Calu3 (cell line): ENCODE measurements at regions of chr11 and their contacts with region 1.

Region 1: GRCh38 chr11:10899121-10899830 is 41.4 kb upstream of the ZBED5 start:
- DNase-seq: peak; percentile 10
- H3K4me3 Mint-ChIP-seq: peak overlapping the region; percentile 48
- H3K27ac Mint-ChIP-seq: peak overlapping the region; percentile 94
- H3K4me1 Mint-ChIP-seq: peaks cover 66% of the 10 kb centered on the region
- H3K27me3 Mint-ChIP-seq: no peaks in the 10 kb centered on the region
- CTCF ChIP-seq: no peak

Region 2: GRCh38 chr11:10857709-10858438 is 41.4 kb before region 1 on chr11 and contains the start of gene ZBED5:
- CTCF ChIA-PET with region 1: interaction called, 8 read pairs
- intact Hi-C with region 1: loop called (anchors 2 kb)
- DNase-seq: peak; percentile 95
- H3K4me3 Mint-ChIP-seq: peak within 1 kb of the TSS; percentile 96
- H3K27ac Mint-ChIP-seq: peak within 1 kb of the TSS; percentile 89
- H3K4me1 Mint-ChIP-seq: peaks cover 17% of the 10 kb centered on the region
- H3K27me3 Mint-ChIP-seq: no peaks in the 10 kb centered on the region
- CTCF ChIP-seq: no peak
- total RNA-seq, gene ZBED5: 49.8 and 51.4 TPM in 2 replicates

Region 3: GRCh38 chr11:10878408-10879214 is 20.7 kb before region 1 on chr11:
- CTCF ChIA-PET with region 1: interaction called, 10 read pairs
- intact Hi-C with region 1: no loop called
- DNase-seq: peak; percentile 55
- H3K4me3 Mint-ChIP-seq: no peak overlapping the region
- H3K27ac Mint-ChIP-seq: peak overlapping the region; percentile 86
- H3K4me1 Mint-ChIP-seq: peaks cover 47% of the 10 kb centered on the region
- H3K27me3 Mint-ChIP-seq: no peaks in the 10 kb centered on the region
- CTCF ChIP-seq: peak; percentile 82

Region 4: DNA sequence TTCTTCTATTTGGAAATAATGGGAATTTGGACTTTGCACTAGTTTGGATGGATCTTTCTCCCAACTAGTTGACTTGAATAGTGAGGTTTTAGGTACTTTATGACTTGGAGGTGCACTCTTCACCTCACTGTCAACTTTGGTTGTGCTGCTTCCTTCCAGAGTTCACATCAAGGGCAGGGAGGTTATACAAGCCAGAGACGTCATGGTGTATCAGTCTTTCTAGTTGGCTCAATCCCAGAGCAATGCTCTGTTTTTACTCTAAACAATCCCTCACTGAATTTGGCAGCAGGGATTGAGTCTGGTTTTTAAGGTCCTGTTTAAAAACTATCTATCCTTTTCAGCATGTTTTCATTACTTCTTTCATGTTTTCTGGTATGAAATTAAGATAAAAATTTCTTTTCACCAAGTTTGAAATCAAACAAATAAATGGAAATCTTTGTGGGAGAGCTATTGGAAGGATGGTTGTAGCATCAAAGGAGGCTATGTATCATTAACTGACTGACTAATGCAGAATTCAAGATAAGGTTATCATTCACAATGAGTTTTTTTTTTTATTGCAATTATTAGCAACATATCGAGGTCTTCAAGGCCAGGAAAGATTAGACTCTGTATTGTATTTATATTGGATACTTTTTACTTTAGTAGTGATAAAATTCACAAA is 13.4 kb before region 1 on chr11:
- CTCF ChIA-PET with region 1: interaction called, 3 read pairs
- intact Hi-C with region 1: loop called (anchors 2 kb)
- DNase-seq: no peak
- H3K4me3 Mint-ChIP-seq: no peak overlapping the region
- H3K27ac Mint-ChIP-seq: peak overlapping the region; percentile 53
- H3K4me1 Mint-ChIP-seq: peaks cover 48% of the 10 kb centered on the region
- H3K27me3 Mint-ChIP-seq: no peaks in the 10 kb centered on the region
- CTCF ChIP-seq: no peak